Stomach (tissue), 19 donors: ENCODE measurements at regions of chr22 and their contacts with region 1.

Region 1: DNA sequence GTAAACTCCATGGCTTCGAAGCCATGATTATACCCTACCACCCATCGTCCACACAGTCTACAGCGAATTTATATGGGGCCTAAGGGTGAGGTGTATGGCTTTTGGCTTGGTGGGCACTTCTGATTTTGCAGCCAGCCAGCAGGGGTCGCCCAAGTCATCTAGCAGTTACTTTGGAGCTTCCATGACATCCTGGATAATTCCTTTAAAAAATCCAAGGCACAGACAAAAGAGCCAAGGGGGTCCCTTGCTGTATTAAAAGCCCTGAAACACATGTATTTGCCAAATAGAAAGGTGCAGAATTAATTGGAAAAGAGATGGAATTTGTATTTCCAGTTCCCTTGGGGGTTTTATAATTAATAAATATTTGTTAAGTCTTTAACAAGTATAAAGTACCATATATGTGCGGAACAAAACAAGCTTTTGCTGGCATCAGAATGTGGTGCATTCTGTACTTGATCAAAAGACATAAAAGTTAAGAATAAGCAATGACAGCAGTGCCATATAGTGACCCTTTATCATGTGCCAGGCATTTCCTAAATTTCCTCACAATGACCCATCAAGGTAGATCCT is 132.8 kb upstream of the PITPNB start:
- DNase-seq: peak; percentile 74 to 90
- H3K4me3 ChIP-seq: no peak overlapping the region
- H3K27ac ChIP-seq: peak overlapping the region in 1 of 5 donors; percentile 16
- H3K4me1 ChIP-seq: peaks cover 0 to 7% (median 0%) of the 10 kb centered on the region in 4 donors
- H3K27me3 ChIP-seq: no peaks in the 10 kb centered on the region
- CTCF ChIP-seq: peak in 5 of 7 experiments; percentile 66 to 86 (median 81)
- EP300 ChIP-seq: no peak
- POLR2A ChIP-seq: no peak

Region 2: GRCh38 chr22:28442264-28442710 is 390.4 kb after region 1 on chr22:
- intact Hi-C with region 1: loop called (anchors 10 kb)
- DNase-seq: peak; percentile 85 to 95
- H3K4me3 ChIP-seq: peak overlapping the region; percentile 54 to 65 (median 62)
- H3K27ac ChIP-seq: peak overlapping the region; percentile 75 to 90 (median 86)
- H3K4me1 ChIP-seq: peaks cover 8 to 64% (median 38%) of the 10 kb centered on the region in 4 donors
- H3K27me3 ChIP-seq: no peaks in the 10 kb centered on the region
- CTCF ChIP-seq: peak in 5 of 7 experiments; percentile 42 to 79 (median 73)
- EP300 ChIP-seq: no peak
- POLR2A ChIP-seq: no peak